ENCODE measurements at regions of chr14 and their contacts with region 1.

Region 1: DNA sequence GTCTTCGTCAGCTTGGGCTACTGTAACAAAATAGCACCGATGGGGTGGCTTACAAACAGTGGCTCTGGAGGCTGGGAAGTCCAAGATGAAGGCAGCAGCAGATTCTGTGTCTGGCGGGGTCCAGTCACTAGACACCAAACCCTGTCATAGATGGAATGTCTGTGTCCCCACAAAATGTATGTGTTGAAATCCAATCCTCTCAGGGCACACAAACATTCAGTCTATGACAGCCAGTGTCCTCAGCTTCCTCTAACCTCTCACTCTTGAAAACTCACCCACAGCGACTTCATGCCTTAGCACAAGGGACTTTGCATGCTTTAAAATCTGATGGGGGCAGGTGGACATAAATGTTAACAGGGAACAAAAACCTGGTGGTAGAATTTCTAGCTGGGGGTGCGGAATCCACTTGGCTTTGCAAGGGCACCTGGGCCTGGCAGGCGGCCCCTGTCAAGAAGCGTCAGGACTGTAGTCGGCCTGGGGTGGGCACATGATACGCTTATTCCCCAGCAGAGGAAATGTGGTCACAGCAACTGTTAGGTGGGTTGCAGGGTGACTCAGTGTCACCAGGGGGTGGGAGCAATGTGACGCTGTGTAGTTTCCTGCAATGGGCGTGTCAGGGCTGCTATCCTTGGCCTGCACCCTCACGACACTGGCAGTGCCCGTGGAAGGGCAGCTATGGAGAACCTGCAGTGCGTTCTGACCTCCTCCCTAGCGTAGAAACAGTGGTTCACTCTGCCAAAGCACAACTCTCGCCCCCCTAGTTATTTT is 17.7 kb downstream of the RIN3 start:
- DNase-seq: no peak
- ATAC-seq: peak; percentile 90
- H3K4me3 ChIP-seq: no peak overlapping the region
- H3K4me3 Mint-ChIP-seq: peak overlapping the region in 7 of 10 donors; percentile 40 to 71 (median 56)
- H3K27ac ChIP-seq: no peak overlapping the region
- H3K27ac Mint-ChIP-seq: peak overlapping the region in 8 of 9 donors; percentile 36 to 94 (median 78)
- H3K4me1 ChIP-seq: peaks cover 21 to 55% of the 10 kb centered on the region in 2 donors
- H3K4me1 Mint-ChIP-seq: peaks cover 36 to 73% (median 52%) of the 10 kb centered on the region in 7 donors
- H3K27me3 ChIP-seq: no peaks in the 10 kb centered on the region
- H3K27me3 Mint-ChIP-seq: peaks cover 0 to 4% (median 0%) of the 10 kb centered on the region in 5 donors

Region 2: GRCh38 chr14:92513204-92513973 is 17.9 kb before region 1 on chr14 and contains the start of gene RIN3:
- CTCF ChIA-PET with region 1: no interaction called
- POLR2A ChIA-PET with region 1: interaction called, 3 read pairs
- intact Hi-C with region 1: loop called in 1 of 2 experiments (anchors 2 kb)
- DNase-seq: peak in 8 of 9 donors; percentile 17 to 43 (median 38)
- ATAC-seq: peak; percentile 71
- H3K4me3 ChIP-seq: peak within 1 kb of the TSS; percentile 76
- H3K4me3 Mint-ChIP-seq: peak within 1 kb of the TSS; percentile 48 to 86 (median 76)
- H3K27ac ChIP-seq: peak within 1 kb of the TSS; percentile 67
- H3K27ac Mint-ChIP-seq: peak within 1 kb of the TSS in 8 of 9 donors; percentile 14 to 71 (median 56)
- H3K4me1 ChIP-seq: peaks cover 25 to 44% of the 10 kb centered on the region in 2 donors
- H3K4me1 Mint-ChIP-seq: peaks cover 21 to 48% (median 34%) of the 10 kb centered on the region in 7 donors
- H3K27me3 ChIP-seq: no peaks in the 10 kb centered on the region
- H3K27me3 Mint-ChIP-seq: peaks cover 0 to 62% (median 0%) of the 10 kb centered on the region in 5 donors
- total RNA-seq, gene RIN3: 45.4 to 182 (median 132) TPM